Activated CD4-positive, alpha-beta memory T cell treated with anti-CD3 and anti-CD28 coated beads, Interleukin-2, amount 10 ng/mL, durations not matched to agents 7 days and 5 days (primary cell): ENCODE measurements at regions of chr12 and their contacts with region 1.

Region 1: DNA sequence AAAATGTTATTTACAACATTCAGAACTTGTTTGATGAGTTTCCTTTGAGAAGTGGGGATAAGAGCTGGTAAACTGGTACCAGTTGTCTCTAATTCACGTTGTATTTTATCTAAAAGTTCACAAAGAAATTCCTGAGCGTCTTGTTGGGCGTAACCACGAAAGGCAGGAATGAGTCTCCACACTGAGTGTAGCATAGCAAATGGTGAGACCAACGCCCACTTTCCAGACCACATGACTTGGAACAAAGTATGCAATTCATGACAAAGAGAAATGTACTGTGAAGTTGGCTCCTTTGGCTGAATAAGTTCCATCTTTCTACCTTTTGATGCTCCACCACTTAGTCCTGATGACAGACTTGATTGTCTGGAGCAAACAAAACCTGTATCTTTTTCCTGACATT is 18.4 kb downstream of the USP44 start:
- DNase-seq: no peak
- H3K4me3 Mint-ChIP-seq: no peak overlapping the region
- H3K27ac Mint-ChIP-seq: no peak overlapping the region
- H3K4me1 Mint-ChIP-seq: no peaks in the 10 kb centered on the region
- H3K27me3 Mint-ChIP-seq: peaks cover 2% of the 10 kb centered on the region

Region 2: DNA sequence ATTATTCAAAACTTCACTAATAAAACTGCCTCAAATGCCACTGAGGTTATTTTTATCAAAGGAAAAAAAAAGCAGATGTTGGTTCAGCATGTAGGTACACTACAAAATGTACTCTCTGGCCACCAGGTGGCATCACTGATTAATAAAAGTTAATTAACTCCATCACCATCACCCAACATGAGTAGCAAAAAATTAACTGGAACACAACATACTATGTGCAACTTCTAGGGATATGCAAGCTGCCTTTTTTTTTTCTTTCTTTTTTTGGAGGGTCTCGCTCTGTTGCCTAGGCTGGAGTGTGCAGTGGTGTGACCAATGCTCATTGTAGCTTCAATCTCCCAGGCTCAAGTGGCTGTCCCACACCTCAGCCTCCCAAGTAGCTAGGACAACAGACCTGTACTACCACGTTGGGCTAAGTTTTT is 415.7 kb before region 1 on chr12:
- CTCF ChIA-PET with region 1: interaction called, 70 read pairs
- POLR2A ChIA-PET with region 1: interaction called, 4 read pairs
- DNase-seq: peak; percentile 57
- H3K4me3 Mint-ChIP-seq: no peak overlapping the region
- H3K27ac Mint-ChIP-seq: no peak overlapping the region
- H3K4me1 Mint-ChIP-seq: peaks cover 12% of the 10 kb centered on the region
- H3K27me3 Mint-ChIP-seq: no peaks in the 10 kb centered on the region

Region 3: GRCh38 chr12:95217377-95218149 is 315.3 kb before region 1 on chr12 and contains the starts of genes FGD6 and VEZT:
- CTCF ChIA-PET with region 1: interaction called, 13 read pairs
- POLR2A ChIA-PET with region 1: interaction called, 3 read pairs
- DNase-seq: peak; percentile 99
- H3K4me3 Mint-ChIP-seq: peak within 1 kb of the TSS; percentile 89
- H3K27ac Mint-ChIP-seq: peak within 1 kb of the TSS; percentile 89
- H3K4me1 Mint-ChIP-seq: peaks cover 22% of the 10 kb centered on the region
- H3K27me3 Mint-ChIP-seq: peaks cover 8% of the 10 kb centered on the region
- total RNA-seq, gene FGD6: 0.45 to 0.71 TPM
- total RNA-seq, gene VEZT: 35.7 to 38.4 TPM

Region 4: GRCh38 chr12:95593266-95593871 is 60.5 kb after region 1 on chr12:
- CTCF ChIA-PET with region 1: no interaction called
- POLR2A ChIA-PET with region 1: no interaction called
- DNase-seq: no peak
- H3K4me3 Mint-ChIP-seq: no peak overlapping the region
- H3K27ac Mint-ChIP-seq: no peak overlapping the region
- H3K4me1 Mint-ChIP-seq: no peaks in the 10 kb centered on the region
- H3K27me3 Mint-ChIP-seq: peaks cover 8% of the 10 kb centered on the region